RWPE1 (cell line): ENCODE measurements at regions of chrX and their contacts with region 1.

Region 1: GRCh38 chrX:53563324-53563723 is 123.2 kb downstream of the HUWE1 start:
- DNase-seq: no peak
- H3K27ac ChIP-seq: no peak overlapping the region
- CTCF ChIP-seq: no peak

Region 2: DNA sequence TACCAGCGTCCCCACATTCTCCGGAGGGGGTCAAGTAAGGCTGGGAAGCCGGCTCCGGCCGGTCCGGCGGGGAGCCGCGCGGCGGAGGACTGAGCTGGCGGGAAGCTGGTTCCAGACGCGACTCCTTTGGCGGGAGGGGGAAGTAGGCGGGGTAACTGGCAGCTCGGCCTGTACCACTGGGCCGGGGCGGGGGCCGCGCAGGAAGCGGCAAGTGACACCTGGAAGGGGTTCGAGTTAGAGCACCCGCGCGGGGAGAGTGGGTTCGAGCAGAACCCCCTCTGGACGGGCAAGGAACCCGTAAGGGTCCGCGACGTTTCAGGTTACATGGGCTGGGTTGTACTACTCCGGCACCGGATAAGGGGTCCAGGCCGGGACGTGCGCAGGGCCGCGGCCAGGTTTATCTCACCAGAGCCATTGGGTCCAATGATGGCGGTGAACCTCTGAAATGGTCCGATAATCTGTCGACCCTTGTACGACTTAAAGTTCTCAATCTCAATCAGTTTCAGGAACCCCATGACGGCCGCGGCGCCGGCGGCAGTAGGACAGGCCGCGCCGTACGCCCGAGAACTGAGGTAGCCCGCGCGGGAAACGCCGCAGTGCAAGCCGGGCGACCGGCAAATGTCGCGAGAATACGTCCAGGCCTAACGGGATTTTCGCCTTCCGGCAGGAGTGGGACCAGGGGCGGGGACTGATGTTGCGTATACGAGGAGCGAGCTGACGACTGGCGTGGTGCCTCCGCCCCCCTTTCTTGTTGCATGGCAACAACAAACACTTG is 141.1 kb before region 1 on chrX and contains the start of gene SMC1A:
- CTCF ChIA-PET with region 1: no interaction called
- POLR2A ChIA-PET with region 1: no interaction called
- DNase-seq: peak; percentile 94
- H3K27ac ChIP-seq: peak within 1 kb of the TSS; percentile 94
- CTCF ChIP-seq: no peak

Region 3: DNA sequence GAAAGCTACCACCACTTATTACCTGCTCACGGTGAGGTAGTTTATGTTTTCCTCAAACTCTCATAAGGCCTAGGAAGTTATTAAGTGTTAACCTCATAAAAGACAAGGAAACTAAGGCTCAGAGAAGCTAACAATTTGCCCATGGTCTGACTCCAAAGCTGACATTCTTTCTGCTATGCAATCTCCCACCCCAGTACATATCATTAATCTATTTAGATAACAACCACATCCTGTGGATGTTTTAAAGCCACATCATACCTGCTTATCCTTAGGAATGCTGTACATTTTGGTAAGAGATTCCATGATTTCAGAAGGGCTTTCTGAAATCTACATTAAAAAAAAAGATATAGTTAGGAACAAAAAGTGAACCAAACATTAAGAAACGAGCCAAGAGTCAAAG is 67.8 kb after region 1 on chrX:
- CTCF ChIA-PET with region 1: no interaction called
- POLR2A ChIA-PET with region 1: no interaction called
- DNase-seq: no peak
- H3K27ac ChIP-seq: no peak overlapping the region
- CTCF ChIP-seq: no peak

Region 4: DNA sequence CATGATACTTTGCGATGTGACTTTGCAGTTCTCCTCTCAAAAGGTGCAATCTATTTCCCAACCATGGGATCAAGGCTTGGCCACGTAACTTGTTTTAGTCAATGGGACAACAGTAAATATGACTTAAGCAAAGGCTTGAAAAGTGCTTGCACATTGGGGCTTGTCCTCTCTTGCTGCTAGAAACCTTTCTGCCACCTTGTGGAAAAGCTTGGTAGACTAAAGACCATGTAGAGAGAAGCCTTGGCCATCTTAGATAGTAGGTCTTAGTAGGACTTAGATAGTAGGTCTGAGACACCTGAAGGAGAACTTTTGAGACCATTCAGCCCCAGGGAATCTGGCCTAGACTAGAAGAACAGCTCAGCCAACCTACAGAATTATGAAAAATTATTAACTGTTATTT is 398.5 kb after region 1 on chrX:
- CTCF ChIA-PET with region 1: interaction called, 10 read pairs
- POLR2A ChIA-PET with region 1: no interaction called
- DNase-seq: no peak
- H3K27ac ChIP-seq: no peak overlapping the region
- CTCF ChIP-seq: no peak